Endothelial cell of umbilical vein (primary cell): ENCODE measurements at regions of chr3 and their contacts with region 1.

Region 1: GRCh38 chr3:167882067-167882667 is 146.6 kb downstream of the SERPINI1 start:
- DNase-seq: peak; percentile 50
- H3K4me3 ChIP-seq: no peak overlapping the region
- H3K27ac ChIP-seq: no peak overlapping the region
- H3K4me1 ChIP-seq: no peaks in the 10 kb centered on the region
- H3K27me3 ChIP-seq: peaks cover 3 to 11% of the 10 kb centered on the region in 2 experiments
- CTCF ChIP-seq: peak; percentile 27 to 39
- POLR2A ChIP-seq: no peak

Region 2: GRCh38 chr3:167380004-167380689 is 502.0 kb before region 1 on chr3 and contains the start of gene ZBBX:
- CTCF ChIA-PET with region 1: interaction called, 93 read pairs
- POLR2A ChIA-PET with region 1: no interaction called
- dilution Hi-C with region 1: no loop called
- intact Hi-C with region 1: loop called (anchors 1 kb)
- DNase-seq: peak; percentile 89
- H3K4me3 ChIP-seq: peak within 1 kb of the TSS in 2 of 3 experiments; percentile 55 to 57
- H3K27ac ChIP-seq: no peak within 1 kb of the TSS
- H3K4me1 ChIP-seq: no peaks in the 10 kb centered on the region
- H3K27me3 ChIP-seq: no peaks in the 10 kb centered on the region
- CTCF ChIP-seq: peak; percentile 87 to 95
- POLR2A ChIP-seq: no peak
- total RNA-seq, gene ZBBX: not detected in 2 replicates

Region 3: DNA sequence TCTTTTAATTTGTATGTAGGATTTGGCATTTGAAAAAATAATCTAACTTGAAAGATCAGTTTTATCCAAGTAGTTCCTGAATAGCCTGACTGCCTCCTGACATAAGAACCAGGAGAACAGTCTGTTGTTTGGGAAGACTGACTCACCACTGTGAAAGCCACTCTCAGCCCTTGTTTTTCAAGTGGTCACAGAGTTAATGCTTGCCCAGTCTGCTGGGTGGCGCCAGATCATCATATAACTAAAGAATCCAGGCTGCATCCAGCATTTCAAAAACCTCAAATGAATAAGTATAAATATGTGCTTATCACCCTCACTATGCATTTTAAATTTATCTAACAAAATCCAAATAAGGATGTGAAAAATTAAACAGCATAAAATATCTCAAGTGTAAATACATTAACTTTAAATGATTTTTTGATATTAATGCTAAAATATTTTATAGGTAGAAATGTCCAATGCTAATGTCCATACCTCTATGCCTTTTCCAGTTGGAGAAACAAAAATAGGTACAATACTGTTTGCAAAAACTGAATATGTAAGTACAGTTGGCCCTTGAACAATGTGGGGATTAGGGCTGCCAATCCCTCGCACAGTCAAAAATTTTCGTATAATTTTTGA is 475.2 kb before region 1 on chr3:
- CTCF ChIA-PET with region 1: interaction called, 6 read pairs
- POLR2A ChIA-PET with region 1: no interaction called
- dilution Hi-C with region 1: no loop called
- intact Hi-C with region 1: loop called (anchors 1 kb)
- DNase-seq: peak; percentile 44
- H3K4me3 ChIP-seq: no peak overlapping the region
- H3K27ac ChIP-seq: no peak overlapping the region
- H3K4me1 ChIP-seq: no peaks in the 10 kb centered on the region
- H3K27me3 ChIP-seq: no peaks in the 10 kb centered on the region
- CTCF ChIP-seq: peak; percentile 9 to 25
- POLR2A ChIP-seq: no peak

Region 4: GRCh38 chr3:167716920-167717319 is 165.2 kb before region 1 on chr3:
- CTCF ChIA-PET with region 1: no interaction called
- POLR2A ChIA-PET with region 1: no interaction called
- dilution Hi-C with region 1: no loop called
- intact Hi-C with region 1: no loop called
- DNase-seq: no peak
- H3K4me3 ChIP-seq: no peak overlapping the region
- H3K27ac ChIP-seq: no peak overlapping the region
- H3K4me1 ChIP-seq: no peaks in the 10 kb centered on the region
- H3K27me3 ChIP-seq: no peaks in the 10 kb centered on the region
- CTCF ChIP-seq: no peak
- POLR2A ChIP-seq: no peak

Region 5: GRCh38 chr3:167892215-167892614 is 10.0 kb after region 1 on chr3:
- CTCF ChIA-PET with region 1: interaction called, 11 read pairs
- POLR2A ChIA-PET with region 1: no interaction called
- dilution Hi-C with region 1: no loop called
- intact Hi-C with region 1: no loop called
- DNase-seq: no peak
- H3K4me3 ChIP-seq: no peak overlapping the region
- H3K27ac ChIP-seq: no peak overlapping the region
- H3K4me1 ChIP-seq: no peaks in the 10 kb centered on the region
- H3K27me3 ChIP-seq: no peaks in the 10 kb centered on the region
- CTCF ChIP-seq: no peak
- POLR2A ChIP-seq: no peak